B cell (primary cell): ENCODE measurements at regions of chr9 and their contacts with region 1.

Region 1: DNA sequence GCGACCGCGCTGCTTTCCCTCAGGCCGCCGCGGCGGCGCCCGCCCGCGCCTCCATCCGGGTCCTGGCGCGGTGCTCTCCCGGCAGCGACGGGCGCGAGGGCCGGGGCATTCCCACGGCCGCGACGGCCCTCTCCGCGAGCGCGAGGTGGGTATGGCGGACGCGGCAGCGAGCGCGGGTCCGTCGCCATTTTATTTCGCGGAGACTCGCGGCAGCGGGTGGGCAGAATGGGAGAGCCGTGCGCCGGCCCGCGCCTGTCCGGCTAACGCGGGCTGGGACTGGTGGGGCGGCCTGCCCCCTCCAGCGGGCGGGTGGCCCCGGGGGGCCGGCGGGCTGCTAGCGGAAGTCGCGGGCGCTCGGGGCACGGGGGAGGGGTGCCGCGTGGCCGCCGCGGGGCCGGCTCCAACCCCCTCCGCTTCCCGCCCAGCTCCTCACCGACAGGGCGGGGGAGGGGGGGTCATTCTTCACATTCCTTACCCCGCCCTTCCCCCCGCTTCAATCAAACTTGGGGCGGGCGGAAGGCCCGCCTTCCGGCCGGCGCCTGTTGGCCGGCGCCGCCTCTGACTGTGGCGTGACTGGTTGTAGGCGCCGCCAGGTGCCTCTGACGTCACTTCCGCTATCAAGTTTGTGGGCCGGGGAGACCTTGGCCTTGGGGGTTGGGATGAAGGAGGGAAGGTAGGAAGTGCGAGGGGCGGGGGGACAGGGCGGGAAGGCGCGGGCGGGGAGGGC is 82.1 kb downstream of the PTPDC1 start:
- DNase-seq: peak; percentile 96
- ATAC-seq: peak; percentile 56
- H3K4me3 ChIP-seq: peak overlapping the region in 4 of 5 experiments; percentile 75 to 86 (median 80)
- H3K4me3 Mint-ChIP-seq: peak overlapping the region; percentile 92
- H3K27ac ChIP-seq: peak overlapping the region; percentile 86 to 99
- H3K27ac Mint-ChIP-seq: peak overlapping the region; percentile 95
- H3K4me1 ChIP-seq: peaks cover 36 to 46% of the 10 kb centered on the region in 2 donors
- H3K4me1 Mint-ChIP-seq: peaks cover 49% of the 10 kb centered on the region
- H3K27me3 ChIP-seq: no peaks in the 10 kb centered on the region
- H3K27me3 Mint-ChIP-seq: no peaks in the 10 kb centered on the region
- CTCF ChIP-seq: no peak

Region 2: GRCh38 chr9:94056442-94056974 is 109.9 kb before region 1 on chr9:
- CTCF ChIA-PET with region 1: no interaction called
- POLR2A ChIA-PET with region 1: no interaction called
- intact Hi-C with region 1: no loop called
- DNase-seq: no peak
- ATAC-seq: no peak
- H3K4me3 ChIP-seq: no peak overlapping the region
- H3K4me3 Mint-ChIP-seq: no peak overlapping the region
- H3K27ac ChIP-seq: no peak overlapping the region
- H3K27ac Mint-ChIP-seq: no peak overlapping the region
- H3K4me1 ChIP-seq: no peaks in the 10 kb centered on the region
- H3K4me1 Mint-ChIP-seq: no peaks in the 10 kb centered on the region
- H3K27me3 ChIP-seq: no peaks in the 10 kb centered on the region
- H3K27me3 Mint-ChIP-seq: no peaks in the 10 kb centered on the region
- CTCF ChIP-seq: no peak

Region 3: GRCh38 chr9:94259077-94259892 is 92.9 kb after region 1 on chr9 and contains the start of gene ZNF169:
- CTCF ChIA-PET with region 1: no interaction called
- POLR2A ChIA-PET with region 1: no interaction called
- intact Hi-C with region 1: loop called (anchors 1 kb)
- DNase-seq: peak; percentile 85
- ATAC-seq: peak; percentile 100
- H3K4me3 ChIP-seq: peak within 1 kb of the TSS; percentile 79 to 100 (median 82)
- H3K4me3 Mint-ChIP-seq: peak within 1 kb of the TSS; percentile 97
- H3K27ac ChIP-seq: peak within 1 kb of the TSS; percentile 26 to 77
- H3K27ac Mint-ChIP-seq: peak within 1 kb of the TSS; percentile 96
- H3K4me1 ChIP-seq: peaks cover 7 to 19% of the 10 kb centered on the region in 2 donors
- H3K4me1 Mint-ChIP-seq: peaks cover 28% of the 10 kb centered on the region
- H3K27me3 ChIP-seq: peaks cover 0 to 6% (median 4%) of the 10 kb centered on the region in 4 experiments
- H3K27me3 Mint-ChIP-seq: peaks cover 3% of the 10 kb centered on the region
- CTCF ChIP-seq: no peak
- total RNA-seq, gene ZNF169: 26.2 and 26.9 TPM in 2 replicates

Region 4: GRCh38 chr9:94656200-94656599 is 489.8 kb after region 1 on chr9:
- CTCF ChIA-PET with region 1: no interaction called
- POLR2A ChIA-PET with region 1: no interaction called
- intact Hi-C with region 1: loop called (anchors 5 kb)
- DNase-seq: peak; percentile 86
- ATAC-seq: peak; percentile 100
- H3K4me3 ChIP-seq: peak overlapping the region in 4 of 5 experiments; percentile 36 to 66 (median 56)
- H3K4me3 Mint-ChIP-seq: peak overlapping the region; percentile 77
- H3K27ac ChIP-seq: peak overlapping the region; percentile 70 to 83
- H3K27ac Mint-ChIP-seq: peak overlapping the region; percentile 69
- H3K4me1 ChIP-seq: peaks cover 14 to 16% of the 10 kb centered on the region in 2 donors
- H3K4me1 Mint-ChIP-seq: peaks cover 17% of the 10 kb centered on the region
- H3K27me3 ChIP-seq: no peaks in the 10 kb centered on the region
- H3K27me3 Mint-ChIP-seq: peaks cover 5% of the 10 kb centered on the region
- CTCF ChIP-seq: no peak

Region 5: GRCh38 chr9:95666096-95666784 is 1499.8 kb after region 1 on chr9:
- CTCF ChIA-PET with region 1: no interaction called
- POLR2A ChIA-PET with region 1: no interaction called
- intact Hi-C with region 1: no loop called
- DNase-seq: no peak
- ATAC-seq: no peak
- H3K4me3 ChIP-seq: no peak overlapping the region
- H3K4me3 Mint-ChIP-seq: no peak overlapping the region
- H3K27ac ChIP-seq: no peak overlapping the region
- H3K27ac Mint-ChIP-seq: no peak overlapping the region
- H3K4me1 ChIP-seq: no peaks in the 10 kb centered on the region
- H3K4me1 Mint-ChIP-seq: no peaks in the 10 kb centered on the region
- H3K27me3 ChIP-seq: peaks cover 0 to 3% (median 0%) of the 10 kb centered on the region in 4 experiments
- H3K27me3 Mint-ChIP-seq: peaks cover 22% of the 10 kb centered on the region
- CTCF ChIP-seq: no peak